ENCODE measurements at regions of chr19 and their contacts with region 1.

Region 1: GRCh38 chr19:12736995-12737834 is at the start of gene GET3:
- DNase-seq: peak; percentile 53 to 92 (median 86)
- ATAC-seq: peak; percentile 85
- H3K4me3 ChIP-seq: peak within 1 kb of the TSS; percentile 76
- H3K4me3 Mint-ChIP-seq: peak within 1 kb of the TSS; percentile 96 to 100 (median 99)
- H3K27ac ChIP-seq: peak within 1 kb of the TSS; percentile 93
- H3K27ac Mint-ChIP-seq: peak within 1 kb of the TSS; percentile 90 to 99 (median 97)
- H3K4me1 ChIP-seq: peaks cover 27 to 30% of the 10 kb centered on the region in 2 donors
- H3K4me1 Mint-ChIP-seq: peaks cover 29 to 42% (median 38%) of the 10 kb centered on the region in 7 donors
- H3K27me3 ChIP-seq: no peaks in the 10 kb centered on the region
- H3K27me3 Mint-ChIP-seq: no peaks in the 10 kb centered on the region
- total RNA-seq, gene GET3: 22.6 to 60.3 (median 27.0) TPM

Region 2: GRCh38 chr19:10835754-10836477 is 1901.3 kb before region 1 on chr19 and contains the start of gene TMED1:
- CTCF ChIA-PET with region 1: no interaction called
- POLR2A ChIA-PET with region 1: no interaction called
- intact Hi-C with region 1: loop called in 1 of 2 experiments (anchors 2 kb)
- DNase-seq: peak; percentile 81 to 97 (median 93)
- ATAC-seq: peak; percentile 92
- H3K4me3 ChIP-seq: peak within 1 kb of the TSS; percentile 98
- H3K4me3 Mint-ChIP-seq: peak within 1 kb of the TSS; percentile 82 to 99 (median 96)
- H3K27ac ChIP-seq: peak within 1 kb of the TSS; percentile 93
- H3K27ac Mint-ChIP-seq: peak within 1 kb of the TSS; percentile 98 to 100 (median 99)
- H3K4me1 ChIP-seq: peaks cover 8 to 13% of the 10 kb centered on the region in 2 donors
- H3K4me1 Mint-ChIP-seq: peaks cover 12 to 20% (median 15%) of the 10 kb centered on the region in 7 donors
- H3K27me3 ChIP-seq: no peaks in the 10 kb centered on the region
- H3K27me3 Mint-ChIP-seq: no peaks in the 10 kb centered on the region
- total RNA-seq, gene TMED1: 7.6 to 12.8 (median 9.9) TPM

Region 3: DNA sequence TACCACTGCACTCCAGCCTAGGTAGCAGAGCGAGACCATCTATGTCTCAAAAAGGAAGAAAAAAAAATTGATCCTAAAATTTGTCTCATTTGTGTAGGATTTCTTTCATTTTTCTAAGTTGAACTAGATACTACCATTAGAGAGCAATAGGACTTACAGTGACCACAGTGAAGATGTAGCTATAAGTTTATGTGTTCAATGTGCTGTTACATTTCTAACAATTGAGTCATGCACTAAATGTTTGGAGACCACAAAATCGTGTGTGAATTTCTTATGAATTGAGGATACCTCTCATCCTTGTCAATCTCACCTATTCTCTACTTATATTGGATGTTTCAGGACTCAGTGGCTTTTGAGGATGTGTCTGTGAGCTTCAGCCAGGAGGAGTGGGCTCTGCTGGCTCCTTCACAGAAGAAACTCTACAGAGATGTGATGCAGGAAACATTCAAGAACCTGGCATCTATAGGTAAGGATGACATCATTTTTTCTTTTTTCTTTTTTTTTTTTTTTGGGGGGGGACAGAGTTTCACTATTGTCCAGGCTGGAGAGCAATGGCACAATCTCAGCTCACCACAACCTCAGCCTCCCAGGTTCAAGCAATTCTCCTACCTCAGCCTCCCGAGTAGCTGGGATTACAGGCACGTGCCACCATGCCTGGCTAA is 113.7 kb before region 1 on chr19:
- CTCF ChIA-PET with region 1: no interaction called
- POLR2A ChIA-PET with region 1: no interaction called
- intact Hi-C with region 1: no loop called
- DNase-seq: no peak
- ATAC-seq: no peak
- H3K4me3 ChIP-seq: no peak overlapping the region
- H3K4me3 Mint-ChIP-seq: no peak overlapping the region
- H3K27ac ChIP-seq: no peak overlapping the region
- H3K27ac Mint-ChIP-seq: peak overlapping the region in 1 of 9 donors; percentile 30
- H3K4me1 ChIP-seq: peaks cover 3 to 6% of the 10 kb centered on the region in 2 donors
- H3K4me1 Mint-ChIP-seq: peaks cover 5 to 25% (median 14%) of the 10 kb centered on the region in 7 donors
- H3K27me3 ChIP-seq: no peaks in the 10 kb centered on the region
- H3K27me3 Mint-ChIP-seq: no peaks in the 10 kb centered on the region

Region 4: GRCh38 chr19:12666265-12667048 is 70.8 kb before region 1 on chr19 and contains the starts of genes MAN2B1 and WDR83:
- CTCF ChIA-PET with region 1: no interaction called
- POLR2A ChIA-PET with region 1: interaction called, 6 read pairs
- intact Hi-C with region 1: loop called in 1 of 2 experiments (anchors 1 kb)
- DNase-seq: peak; percentile 56 to 86 (median 72)
- ATAC-seq: peak; percentile 82
- H3K4me3 ChIP-seq: peak within 1 kb of the TSS; percentile 92
- H3K4me3 Mint-ChIP-seq: peak within 1 kb of the TSS; percentile 90 to 100 (median 98)
- H3K27ac ChIP-seq: peak within 1 kb of the TSS; percentile 99
- H3K27ac Mint-ChIP-seq: peak within 1 kb of the TSS; percentile 77 to 100 (median 91)
- H3K4me1 ChIP-seq: peaks cover 38% of the 10 kb centered on the region in 2 donors
- H3K4me1 Mint-ChIP-seq: peaks cover 22 to 69% (median 45%) of the 10 kb centered on the region in 7 donors
- H3K27me3 ChIP-seq: no peaks in the 10 kb centered on the region
- H3K27me3 Mint-ChIP-seq: no peaks in the 10 kb centered on the region
- total RNA-seq, gene MAN2B1: 105 to 215 (median 138) TPM
- total RNA-seq, gene WDR83: 7.8 to 18.6 (median 14.7) TPM

Region 5: DNA sequence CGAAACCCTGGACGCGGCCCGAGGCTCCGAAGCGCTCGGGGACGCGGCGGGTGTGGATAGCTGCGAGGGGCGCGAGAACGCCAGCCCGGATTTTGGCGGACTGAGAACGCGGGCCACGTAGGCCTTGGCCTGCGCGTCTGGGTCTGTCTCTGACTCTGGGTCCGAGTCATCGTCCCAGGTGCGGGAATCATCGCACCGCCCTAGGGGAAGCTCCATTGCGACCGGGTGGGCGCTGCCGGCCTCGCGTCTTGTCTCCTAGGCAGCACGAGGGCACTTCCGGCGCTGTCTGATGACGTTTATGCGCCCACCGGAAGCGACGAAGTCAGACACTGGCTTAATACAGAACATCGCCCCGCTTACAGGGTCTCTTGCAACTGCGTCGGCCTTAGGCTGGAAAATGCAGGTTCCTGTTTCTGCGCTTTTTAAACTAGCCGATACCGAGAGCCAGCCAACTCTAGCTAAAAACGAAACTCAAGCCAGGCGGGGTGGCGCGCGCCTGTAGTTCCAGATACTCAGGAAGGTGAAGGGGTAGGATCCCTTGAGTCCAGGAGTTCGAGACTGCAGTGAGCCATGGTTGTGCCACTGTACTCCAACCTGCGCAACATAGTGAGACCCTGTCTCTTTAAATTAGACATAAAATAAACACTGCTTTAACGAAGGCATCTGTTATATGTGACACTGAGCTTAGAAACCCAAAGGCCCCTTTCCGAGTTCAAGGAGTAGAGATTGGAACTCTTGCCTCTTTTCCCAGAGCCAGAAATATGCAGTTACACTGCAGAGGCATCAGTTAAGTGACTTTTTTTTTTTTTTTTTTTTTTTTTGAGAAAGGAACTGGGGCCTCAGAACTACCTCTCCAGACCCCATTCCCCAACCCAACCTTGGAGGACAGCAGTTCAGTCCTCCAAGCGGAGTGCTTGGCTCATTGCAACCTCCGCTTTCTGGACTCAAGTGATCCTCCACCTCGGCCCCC is 40.6 kb before region 1 on chr19 and contains the start of gene FBXW9:
- CTCF ChIA-PET with region 1: interaction called, 5 read pairs
- POLR2A ChIA-PET with region 1: interaction called, 11 read pairs
- intact Hi-C with region 1: loop called (anchors 1 to 2 kb)
- DNase-seq: peak; percentile 88 to 97 (median 95)
- ATAC-seq: peak; percentile 97
- H3K4me3 ChIP-seq: peak within 1 kb of the TSS; percentile 98
- H3K4me3 Mint-ChIP-seq: peak within 1 kb of the TSS; percentile 86 to 95 (median 91)
- H3K27ac ChIP-seq: peak within 1 kb of the TSS; percentile 82
- H3K27ac Mint-ChIP-seq: peak within 1 kb of the TSS; percentile 90 to 97 (median 97)
- H3K4me1 ChIP-seq: peaks cover 9 to 11% of the 10 kb centered on the region in 2 donors
- H3K4me1 Mint-ChIP-seq: peaks cover 0 to 15% (median 12%) of the 10 kb centered on the region in 7 donors
- H3K27me3 ChIP-seq: no peaks in the 10 kb centered on the region
- H3K27me3 Mint-ChIP-seq: no peaks in the 10 kb centered on the region
- total RNA-seq, gene FBXW9: 2.5 to 8.6 (median 4.3) TPM

Region 6: DNA sequence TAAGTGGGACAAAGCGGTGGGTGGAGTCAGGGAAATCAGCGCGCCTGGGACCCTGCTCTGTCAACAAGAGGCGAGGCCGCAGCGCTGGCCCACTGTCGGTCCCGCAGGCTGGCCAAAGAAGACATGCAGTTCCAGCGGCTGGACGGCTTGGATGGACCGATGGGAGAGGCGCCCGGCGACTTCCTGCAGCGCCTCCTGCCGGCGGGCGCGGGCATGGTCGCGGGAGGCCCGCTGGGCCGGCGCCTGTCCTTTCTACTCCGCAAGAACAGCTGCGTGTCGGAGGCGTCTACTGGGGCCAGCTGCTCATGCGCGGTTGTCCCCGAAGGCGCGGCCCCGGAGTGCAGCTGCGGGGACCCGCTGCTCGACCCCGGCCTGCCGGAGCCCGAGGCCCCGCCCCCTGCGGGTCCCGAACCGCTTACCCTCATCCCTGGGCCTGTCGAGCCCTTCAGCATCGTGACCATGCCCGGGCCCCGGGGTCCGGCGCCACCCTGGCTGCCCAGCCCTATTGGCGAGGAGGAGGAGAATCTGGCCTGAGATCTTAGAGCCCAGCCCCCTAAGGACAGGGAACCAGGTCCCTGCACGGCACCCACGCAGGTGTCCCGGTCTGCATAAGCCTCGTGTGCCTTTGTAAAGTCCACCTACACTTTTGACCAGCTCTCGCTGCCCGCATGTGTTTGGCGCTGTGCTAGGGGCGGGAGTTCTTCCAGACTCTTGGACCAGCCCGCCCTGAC is 20.5 kb after region 1 on chr19:
- CTCF ChIA-PET with region 1: interaction called, 7 read pairs
- POLR2A ChIA-PET with region 1: interaction called, 4 read pairs
- intact Hi-C with region 1: loop called (anchors 1 to 2 kb)
- DNase-seq: peak in 8 of 9 donors; percentile 40 to 84 (median 57)
- ATAC-seq: peak; percentile 87
- H3K4me3 ChIP-seq: peak overlapping the region; percentile 27
- H3K4me3 Mint-ChIP-seq: peak overlapping the region in 8 of 10 donors; percentile 13 to 64 (median 46)
- H3K27ac ChIP-seq: no peak overlapping the region
- H3K27ac Mint-ChIP-seq: no peak overlapping the region
- H3K4me1 ChIP-seq: peaks cover 0 to 7% of the 10 kb centered on the region in 2 donors
- H3K4me1 Mint-ChIP-seq: peaks cover 0 to 10% (median 8%) of the 10 kb centered on the region in 7 donors
- H3K27me3 ChIP-seq: no peaks in the 10 kb centered on the region
- H3K27me3 Mint-ChIP-seq: peaks cover 10 to 20% (median 11%) of the 10 kb centered on the region in 5 donors

Region 7: DNA sequence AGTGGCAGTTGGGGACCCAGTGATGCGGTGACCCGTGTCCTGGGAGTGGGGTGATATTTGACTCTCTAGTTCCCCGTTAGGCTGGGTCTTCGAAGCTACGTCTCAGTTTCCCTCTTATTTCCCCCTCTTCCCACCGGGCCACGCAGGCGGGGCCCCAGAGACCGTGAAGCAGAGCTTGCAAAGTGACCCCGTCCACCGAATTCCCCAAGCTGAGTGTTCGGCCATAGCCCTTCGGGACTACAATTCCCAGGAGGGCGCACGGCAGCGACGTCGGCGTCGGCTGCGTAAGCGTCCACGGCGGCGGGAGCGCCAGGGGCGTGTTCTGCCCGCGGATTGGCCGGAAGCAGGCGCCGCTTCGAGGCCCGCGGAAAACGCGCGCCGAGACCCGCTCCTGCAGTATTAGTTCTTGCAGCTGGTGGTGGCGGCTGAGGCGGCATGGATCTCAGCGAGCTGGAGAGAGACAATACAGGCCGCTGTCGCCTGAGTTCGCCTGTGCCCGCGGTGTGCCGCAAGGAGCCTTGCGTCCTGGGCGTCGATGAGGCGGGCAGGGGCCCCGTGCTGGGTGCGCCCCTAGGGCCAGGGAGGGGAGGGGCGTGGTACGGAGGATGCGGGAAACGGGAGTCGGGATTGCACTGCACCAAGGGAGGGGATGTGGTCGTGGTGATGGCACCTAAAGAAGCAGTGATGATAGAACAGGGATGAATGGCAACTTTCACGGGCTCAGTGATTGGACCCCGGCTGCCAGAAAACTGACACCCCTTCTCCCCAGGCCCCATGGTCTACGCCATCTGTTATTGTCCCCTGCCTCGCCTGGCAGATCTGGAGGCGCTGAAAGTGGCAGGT is 69.2 kb after region 1 on chr19 and contains the start of gene RNASEH2A:
- CTCF ChIA-PET with region 1: no interaction called
- POLR2A ChIA-PET with region 1: interaction called, 6 read pairs
- intact Hi-C with region 1: loop called (anchors 1 to 2 kb)
- DNase-seq: peak; percentile 74 to 87 (median 84)
- ATAC-seq: peak; percentile 95
- H3K4me3 ChIP-seq: peak within 1 kb of the TSS; percentile 73
- H3K4me3 Mint-ChIP-seq: peak within 1 kb of the TSS; percentile 81 to 96 (median 91)
- H3K27ac ChIP-seq: peak within 1 kb of the TSS; percentile 70
- H3K27ac Mint-ChIP-seq: peak within 1 kb of the TSS; percentile 71 to 94 (median 89)
- H3K4me1 ChIP-seq: peaks cover 18% of the 10 kb centered on the region in 2 donors
- H3K4me1 Mint-ChIP-seq: peaks cover 15 to 26% (median 21%) of the 10 kb centered on the region in 7 donors
- H3K27me3 ChIP-seq: no peaks in the 10 kb centered on the region
- H3K27me3 Mint-ChIP-seq: peaks cover 0 to 6% (median 0%) of the 10 kb centered on the region in 5 donors
- total RNA-seq, gene RNASEH2A: 1.6 to 30.9 (median 9.3) TPM

Region 8: DNA sequence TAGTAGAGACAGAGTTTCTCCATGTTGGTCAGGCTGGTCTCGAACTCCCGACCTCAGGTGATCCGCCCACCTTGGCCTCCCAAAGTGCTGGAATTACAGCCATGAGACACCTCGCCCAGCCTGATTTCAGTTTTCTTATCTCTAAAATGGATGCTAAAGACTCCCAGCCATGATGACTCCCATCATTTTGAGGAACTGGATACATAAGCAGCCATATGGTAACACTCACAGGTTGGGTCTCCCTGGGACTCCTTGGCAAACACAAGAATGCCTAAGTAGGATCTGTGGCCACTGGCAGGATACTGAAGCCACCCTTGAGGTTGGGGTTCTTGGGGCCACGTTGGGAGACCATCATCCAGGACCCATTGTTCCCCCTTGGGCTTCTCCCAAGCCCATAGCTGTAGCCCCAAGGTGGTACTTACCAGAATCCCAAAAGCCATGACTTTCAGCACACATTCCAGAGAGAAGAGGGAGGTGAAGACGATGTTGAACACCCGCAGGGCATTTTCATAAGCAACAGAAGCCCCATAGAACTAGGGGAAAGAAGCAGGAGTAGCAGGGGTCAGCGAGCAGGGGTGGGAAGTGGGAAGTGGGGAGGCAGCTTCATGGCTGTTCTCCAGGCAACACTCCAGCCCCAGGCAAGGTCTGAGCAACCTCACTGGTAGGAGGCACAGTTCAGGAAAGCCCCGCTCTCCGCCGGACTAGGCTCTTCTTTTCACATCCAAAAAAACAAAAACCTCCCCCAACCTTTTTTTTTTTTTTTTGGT is 515.5 kb after region 1 on chr19:
- CTCF ChIA-PET with region 1: no interaction called
- POLR2A ChIA-PET with region 1: no interaction called
- intact Hi-C with region 1: no loop called
- DNase-seq: no peak
- ATAC-seq: no peak
- H3K4me3 ChIP-seq: no peak overlapping the region
- H3K4me3 Mint-ChIP-seq: no peak overlapping the region
- H3K27ac ChIP-seq: no peak overlapping the region
- H3K27ac Mint-ChIP-seq: no peak overlapping the region
- H3K4me1 ChIP-seq: no peaks in the 10 kb centered on the region
- H3K4me1 Mint-ChIP-seq: peaks cover 0 to 4% (median 3%) of the 10 kb centered on the region in 7 donors
- H3K27me3 ChIP-seq: no peaks in the 10 kb centered on the region
- H3K27me3 Mint-ChIP-seq: peaks cover 4 to 11% (median 8%) of the 10 kb centered on the region in 5 donors

Region 9: GRCh38 chr19:13463296-13463695 is 726.1 kb after region 1 on chr19:
- CTCF ChIA-PET with region 1: no interaction called
- POLR2A ChIA-PET with region 1: no interaction called
- intact Hi-C with region 1: no loop called
- DNase-seq: no peak
- ATAC-seq: no peak
- H3K4me3 ChIP-seq: no peak overlapping the region
- H3K4me3 Mint-ChIP-seq: no peak overlapping the region
- H3K27ac ChIP-seq: no peak overlapping the region
- H3K27ac Mint-ChIP-seq: no peak overlapping the region
- H3K4me1 ChIP-seq: no peaks in the 10 kb centered on the region
- H3K4me1 Mint-ChIP-seq: no peaks in the 10 kb centered on the region
- H3K27me3 ChIP-seq: no peaks in the 10 kb centered on the region
- H3K27me3 Mint-ChIP-seq: peaks cover 0 to 42% (median 32%) of the 10 kb centered on the region in 5 donors